A673 (cell line): ENCODE measurements at regions of chr4 and their contacts with region 1.

Region 1: GRCh38 chr4:173013232-173013930 is 155.2 kb upstream of the GALNT7 start:
- DNase-seq: peak; percentile 82
- H3K4me3 ChIP-seq: no peak overlapping the region
- H3K27ac ChIP-seq: peak overlapping the region; percentile 68
- H3K4me1 ChIP-seq: peaks cover 40% of the 10 kb centered on the region
- H3K27me3 ChIP-seq: no peaks in the 10 kb centered on the region
- CTCF ChIP-seq: peak; percentile 75

Region 2: GRCh38 chr4:172707605-172708004 is 305.8 kb before region 1 on chr4:
- CTCF ChIA-PET with region 1: no interaction called
- POLR2A ChIA-PET with region 1: no interaction called
- intact Hi-C with region 1: no loop called
- DNase-seq: no peak
- H3K4me3 ChIP-seq: no peak overlapping the region
- H3K27ac ChIP-seq: no peak overlapping the region
- H3K4me1 ChIP-seq: no peaks in the 10 kb centered on the region
- H3K27me3 ChIP-seq: no peaks in the 10 kb centered on the region
- CTCF ChIP-seq: no peak

Region 3: GRCh38 chr4:172871381-172871780 is 142.0 kb before region 1 on chr4:
- CTCF ChIA-PET with region 1: no interaction called
- POLR2A ChIA-PET with region 1: no interaction called
- intact Hi-C with region 1: loop called (anchors 5 kb)
- DNase-seq: peak; percentile 52
- H3K4me3 ChIP-seq: no peak overlapping the region
- H3K27ac ChIP-seq: no peak overlapping the region
- H3K4me1 ChIP-seq: no peaks in the 10 kb centered on the region
- H3K27me3 ChIP-seq: no peaks in the 10 kb centered on the region
- CTCF ChIP-seq: peak; percentile 38

Region 4: DNA sequence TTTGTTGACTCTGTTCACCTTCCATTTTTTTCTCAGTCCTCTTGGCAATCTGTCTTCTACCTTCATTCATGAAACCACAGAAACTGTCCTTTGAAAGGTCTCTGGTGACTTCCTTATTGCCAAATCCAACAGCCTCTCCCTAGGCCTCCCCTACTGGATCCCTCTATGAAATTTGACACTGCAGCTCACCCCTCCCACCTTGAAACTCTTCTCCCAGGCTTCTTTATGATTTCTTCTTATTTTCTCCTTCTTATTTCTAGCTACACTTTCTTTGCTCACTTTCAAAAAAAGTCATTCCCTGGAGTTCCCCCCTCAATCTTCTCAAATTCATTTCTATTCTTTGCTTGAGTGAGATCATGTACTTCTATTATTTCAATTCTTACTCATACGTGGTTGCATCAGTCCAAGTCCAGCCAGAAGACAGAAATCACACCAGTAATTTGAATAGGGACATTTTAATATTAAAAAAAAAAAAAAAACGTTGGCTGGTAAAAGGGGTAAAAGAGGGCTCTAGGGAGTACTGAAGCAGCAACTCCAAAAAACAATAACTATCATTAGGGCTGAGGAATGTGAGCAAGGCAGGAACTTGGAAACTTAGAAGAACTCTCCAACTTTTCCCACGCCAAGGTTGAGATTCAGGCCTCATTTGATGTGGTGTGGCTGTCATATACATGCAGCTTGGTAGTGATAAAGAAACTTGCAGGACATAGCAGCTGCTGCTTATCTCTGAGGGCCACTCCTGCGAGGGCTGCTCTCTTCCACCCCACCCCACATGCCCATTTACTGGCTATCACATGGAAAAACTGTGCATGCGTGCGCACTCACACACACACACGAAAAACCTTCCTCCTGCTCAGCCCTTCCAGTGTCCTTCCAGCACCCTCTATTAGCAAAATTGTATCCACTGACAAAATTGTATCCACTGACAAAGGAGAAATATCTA is 14.6 kb before region 1 on chr4:
- CTCF ChIA-PET with region 1: interaction called, 16 read pairs
- POLR2A ChIA-PET with region 1: no interaction called
- intact Hi-C with region 1: no loop called
- DNase-seq: peak; percentile 77
- H3K4me3 ChIP-seq: no peak overlapping the region
- H3K27ac ChIP-seq: peak overlapping the region; percentile 72
- H3K4me1 ChIP-seq: peaks cover 17% of the 10 kb centered on the region
- H3K27me3 ChIP-seq: no peaks in the 10 kb centered on the region
- CTCF ChIP-seq: no peak

Region 5: GRCh38 chr4:173264684-173265185 is 251.4 kb after region 1 on chr4:
- CTCF ChIA-PET with region 1: interaction called, 13 read pairs
- POLR2A ChIA-PET with region 1: no interaction called
- intact Hi-C with region 1: no loop called
- DNase-seq: peak; percentile 92
- H3K4me3 ChIP-seq: no peak overlapping the region
- H3K27ac ChIP-seq: peak overlapping the region; percentile 81
- H3K4me1 ChIP-seq: peaks cover 63% of the 10 kb centered on the region
- H3K27me3 ChIP-seq: no peaks in the 10 kb centered on the region
- CTCF ChIP-seq: no peak

Region 6: DNA sequence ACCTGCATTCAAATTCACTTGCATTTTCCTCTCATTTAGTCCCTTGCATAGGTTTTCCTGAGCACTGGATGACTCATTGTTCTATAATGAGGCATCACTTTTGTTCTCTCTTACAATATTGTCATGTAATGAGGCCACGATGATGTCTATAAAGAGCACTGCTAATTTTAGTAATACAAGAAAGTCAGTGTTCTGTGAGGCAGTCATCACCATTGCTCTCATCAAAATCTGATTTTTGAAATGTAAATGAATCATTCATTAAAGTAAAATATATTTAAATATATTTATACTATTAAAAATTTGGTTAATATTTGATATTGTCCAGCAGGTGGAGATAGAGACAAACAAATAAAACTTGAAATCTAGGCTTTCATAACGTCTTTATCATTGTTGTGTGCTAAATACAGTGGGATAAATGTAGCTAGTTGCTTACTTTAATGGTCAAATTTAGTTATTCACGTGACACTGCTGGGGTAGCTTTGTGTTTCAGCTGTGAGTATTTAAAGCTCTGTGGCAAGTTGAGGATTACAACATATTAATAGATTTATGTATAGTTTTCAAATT is 305.3 kb after region 1 on chr4:
- CTCF ChIA-PET with region 1: interaction called, 3 read pairs
- POLR2A ChIA-PET with region 1: no interaction called
- intact Hi-C with region 1: loop called (anchors 5 kb)
- DNase-seq: peak; percentile 71
- H3K4me3 ChIP-seq: no peak overlapping the region
- H3K27ac ChIP-seq: no peak overlapping the region
- H3K4me1 ChIP-seq: peaks cover 20% of the 10 kb centered on the region
- H3K27me3 ChIP-seq: no peaks in the 10 kb centered on the region
- CTCF ChIP-seq: peak; percentile 54; the same call in 1 of the 2 replicates

Region 7: GRCh38 chr4:174036111-174036510 is 1022.7 kb after region 1 on chr4:
- CTCF ChIA-PET with region 1: interaction called, 12 read pairs
- POLR2A ChIA-PET with region 1: no interaction called
- intact Hi-C with region 1: no loop called
- DNase-seq: peak; percentile 60
- H3K4me3 ChIP-seq: no peak overlapping the region
- H3K27ac ChIP-seq: peak overlapping the region; percentile 38
- H3K4me1 ChIP-seq: peaks cover 37% of the 10 kb centered on the region
- H3K27me3 ChIP-seq: no peaks in the 10 kb centered on the region
- CTCF ChIP-seq: no peak